ENCODE measurements at regions of chr2 and their contacts with region 1.

Region 1: GRCh38 chr2:121128754-121129659 is 156.0 kb downstream of the TFCP2L1 start:
- DNase-seq: peak in 1 of 2 experiments; percentile 78
- H3K4me3 ChIP-seq: no peak overlapping the region
- H3K27ac ChIP-seq: no peak overlapping the region
- H3K4me1 ChIP-seq: peaks cover 3 to 26% (median 13%) of the 10 kb centered on the region in 4 experiments
- H3K27me3 ChIP-seq: peaks cover 0 to 6% (median under 1%) of the 10 kb centered on the region in 4 experiments; a peak in 2 of 7 replicates
- CTCF ChIP-seq: peak; percentile 75 to 95 (median 80)
- EP300 ChIP-seq: no peak
- POLR2A ChIP-seq: no peak
- RAD21 ChIP-seq: peak; percentile 82 to 86

Region 2: DNA sequence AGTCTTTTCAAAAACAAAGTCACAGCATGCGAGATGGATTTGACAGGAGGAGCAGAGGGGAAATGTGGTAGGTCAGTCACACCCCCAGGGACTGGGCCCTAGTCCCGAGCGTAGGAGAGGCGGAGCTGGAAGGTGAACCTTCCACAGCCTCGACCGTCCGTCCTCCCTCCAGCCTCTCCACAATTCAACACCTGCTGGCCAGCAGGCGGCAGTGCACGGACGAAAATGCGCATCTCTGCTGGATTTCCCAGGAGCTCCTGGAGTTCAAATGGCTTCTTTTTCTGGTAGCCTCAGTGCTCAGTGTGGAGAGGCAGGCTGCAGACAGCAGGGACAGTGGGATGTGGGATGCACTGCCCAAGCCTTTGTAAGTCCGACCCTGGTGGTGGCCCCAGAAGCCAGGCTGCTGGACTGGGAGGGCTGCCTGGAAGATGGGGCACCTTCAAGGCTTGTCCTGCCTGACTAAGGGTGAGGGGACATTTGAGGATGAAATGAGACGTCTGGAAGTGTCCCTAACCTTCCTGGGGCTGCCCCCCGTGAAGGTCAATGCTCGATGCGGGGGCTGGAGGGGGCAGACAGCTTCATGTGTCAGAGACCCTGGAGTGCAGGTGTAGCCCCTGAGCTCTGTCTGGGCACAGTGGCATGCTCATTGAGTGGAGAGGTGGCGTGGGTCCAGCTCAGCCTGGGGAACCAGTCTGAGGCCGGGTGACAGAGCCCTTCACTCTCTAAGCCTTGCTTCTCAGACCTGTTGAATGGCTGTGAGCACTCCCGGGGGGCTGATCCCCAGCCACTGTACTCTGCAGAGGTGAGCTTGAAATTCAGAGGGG is 33.5 kb before region 1 on chr2:
- CTCF ChIA-PET with region 1: interaction called, 208 read pairs
- POLR2A ChIA-PET with region 1: no interaction called
- DNase-seq: peak in 1 of 2 experiments; percentile 81
- H3K4me3 ChIP-seq: no peak overlapping the region
- H3K27ac ChIP-seq: no peak overlapping the region
- H3K4me1 ChIP-seq: no peaks in the 10 kb centered on the region; a peak in 1 of 7 replicates
- H3K27me3 ChIP-seq: no peaks in the 10 kb centered on the region; a peak in 4 of 7 replicates
- CTCF ChIP-seq: peak; percentile 93 to 96 (median 93)
- EP300 ChIP-seq: no peak
- POLR2A ChIP-seq: no peak
- RAD21 ChIP-seq: peak; percentile 85 to 91

Region 3: DNA sequence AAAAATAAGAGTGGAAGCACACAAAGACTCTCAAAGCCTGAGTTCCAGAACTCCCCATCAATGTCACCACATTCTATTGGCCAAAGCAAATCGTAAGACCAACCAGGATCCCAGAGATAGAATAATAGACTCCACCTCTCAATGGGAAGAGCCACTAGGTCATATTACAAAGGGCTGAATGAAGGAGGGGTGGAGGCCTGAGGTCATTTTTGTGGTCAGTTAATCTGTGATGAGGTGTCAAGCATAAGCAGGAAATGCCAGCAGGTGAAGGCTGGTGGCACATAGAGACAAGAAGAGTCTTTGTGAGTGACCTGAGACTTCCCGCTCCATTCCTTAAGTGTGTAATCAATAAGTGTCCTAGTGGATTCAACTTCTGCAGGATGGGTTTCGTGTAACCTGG is 11.7 kb after region 1 on chr2:
- CTCF ChIA-PET with region 1: interaction called, 28 read pairs
- POLR2A ChIA-PET with region 1: no interaction called
- DNase-seq: no peak
- H3K4me3 ChIP-seq: no peak overlapping the region
- H3K27ac ChIP-seq: no peak overlapping the region
- H3K4me1 ChIP-seq: no peaks in the 10 kb centered on the region
- H3K27me3 ChIP-seq: no peaks in the 10 kb centered on the region
- CTCF ChIP-seq: no peak
- EP300 ChIP-seq: no peak
- POLR2A ChIP-seq: no peak
- RAD21 ChIP-seq: no peak

Region 4: GRCh38 chr2:121171625-121172119 is 42.7 kb after region 1 on chr2:
- CTCF ChIA-PET with region 1: interaction called, 18 read pairs
- POLR2A ChIA-PET with region 1: no interaction called
- DNase-seq: no peak
- H3K4me3 ChIP-seq: no peak overlapping the region
- H3K27ac ChIP-seq: no peak overlapping the region
- H3K4me1 ChIP-seq: no peaks in the 10 kb centered on the region; a peak in 1 of 7 replicates
- H3K27me3 ChIP-seq: no peaks in the 10 kb centered on the region; a peak in 3 of 7 replicates
- CTCF ChIP-seq: no peak
- EP300 ChIP-seq: no peak
- POLR2A ChIP-seq: no peak
- RAD21 ChIP-seq: no peak

Region 5: DNA sequence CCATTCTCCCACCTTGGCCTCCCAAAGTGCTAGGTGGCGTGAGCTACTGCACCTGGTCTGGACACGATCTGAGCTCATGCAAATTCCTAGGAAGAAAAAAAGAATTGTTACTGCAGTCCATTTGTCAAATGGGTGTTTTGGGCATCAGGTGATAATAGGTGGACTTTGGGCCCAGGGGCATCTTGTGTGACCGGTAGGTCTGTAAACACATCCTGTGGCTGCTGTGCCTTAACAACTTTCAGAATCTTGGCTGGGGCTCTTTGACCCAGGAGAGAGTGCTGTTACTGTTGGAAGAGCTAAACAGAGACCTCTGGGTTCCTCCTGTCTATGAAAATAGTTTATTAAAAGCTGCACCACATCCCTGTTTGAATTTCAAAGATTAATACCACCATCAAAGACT is 190.9 kb after region 1 on chr2:
- CTCF ChIA-PET with region 1: interaction called, 36 read pairs
- POLR2A ChIA-PET with region 1: no interaction called
- DNase-seq: no peak
- H3K4me3 ChIP-seq: no peak overlapping the region
- H3K27ac ChIP-seq: no peak overlapping the region
- H3K4me1 ChIP-seq: no peaks in the 10 kb centered on the region
- H3K27me3 ChIP-seq: no peaks in the 10 kb centered on the region
- CTCF ChIP-seq: no peak
- EP300 ChIP-seq: no peak
- POLR2A ChIP-seq: no peak
- RAD21 ChIP-seq: no peak

Region 6: DNA sequence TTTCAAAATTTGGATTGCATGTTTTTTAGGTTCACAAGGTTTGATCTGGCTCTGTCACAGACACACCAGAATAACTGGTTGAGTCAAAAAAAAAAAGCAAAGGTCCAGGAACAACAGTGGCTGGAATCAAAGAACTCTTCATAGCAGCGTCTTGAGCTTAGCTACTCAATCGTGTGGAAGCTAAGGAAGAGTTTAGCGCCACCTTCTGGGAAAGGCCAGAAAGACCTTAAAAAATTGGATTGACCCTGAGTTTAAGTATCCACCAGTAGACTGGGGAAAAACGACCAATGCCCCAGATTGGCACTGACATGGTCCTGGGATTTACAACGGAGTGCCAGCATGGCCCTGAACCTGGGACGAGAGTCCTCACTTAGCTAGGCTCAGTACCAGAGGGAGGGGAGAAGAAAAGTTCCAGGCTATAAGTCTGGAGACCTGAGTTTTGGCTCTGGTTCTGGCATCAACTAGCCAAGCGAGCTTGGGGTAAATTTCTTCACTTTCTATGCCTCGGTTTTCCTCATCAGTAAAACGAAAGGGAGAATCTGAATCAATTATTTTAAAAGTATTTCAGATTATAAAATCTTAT is 227.1 kb after region 1 on chr2:
- CTCF ChIA-PET with region 1: interaction called, 91 read pairs
- POLR2A ChIA-PET with region 1: no interaction called
- DNase-seq: peak; percentile 46 to 71
- H3K4me3 ChIP-seq: no peak overlapping the region
- H3K27ac ChIP-seq: no peak overlapping the region
- H3K4me1 ChIP-seq: no peaks in the 10 kb centered on the region
- H3K27me3 ChIP-seq: no peaks in the 10 kb centered on the region
- CTCF ChIP-seq: peak in 2 of 3 experiments; percentile 75 to 85; a peak in 3 of 4 replicates
- EP300 ChIP-seq: no peak
- POLR2A ChIP-seq: no peak
- RAD21 ChIP-seq: peak; percentile 77 to 80